Colonic mucosa (tissue), 4 donors: ENCODE measurements at regions of chr1 and their contacts with region 1.

Region 1: GRCh38 chr1:42335050-42335808 is at the start of gene FOXJ3:
- DNase-seq: peak; percentile 93
- H3K4me3 ChIP-seq: peak within 1 kb of the TSS; percentile 91
- H3K27ac ChIP-seq: peak within 1 kb of the TSS; percentile 93
- H3K4me1 ChIP-seq: peaks cover 16% of the 10 kb centered on the region
- H3K27me3 ChIP-seq: no peaks in the 10 kb centered on the region
- CTCF ChIP-seq: no peak
- total RNA-seq, gene FOXJ3: 39.9 to 44.8 TPM

Region 2: GRCh38 chr1:42186152-42186551 is 149.1 kb before region 1 on chr1:
- intact Hi-C with region 1: loop called (anchors 10 kb)
- DNase-seq: no peak
- H3K4me3 ChIP-seq: no peak overlapping the region
- H3K27ac ChIP-seq: no peak overlapping the region
- H3K4me1 ChIP-seq: no peaks in the 10 kb centered on the region
- H3K27me3 ChIP-seq: no peaks in the 10 kb centered on the region
- CTCF ChIP-seq: no peak

Region 3: GRCh38 chr1:42221952-42222606 is 113.2 kb before region 1 on chr1:
- intact Hi-C with region 1: no loop called
- DNase-seq: no peak
- H3K4me3 ChIP-seq: no peak overlapping the region
- H3K27ac ChIP-seq: no peak overlapping the region
- H3K4me1 ChIP-seq: no peaks in the 10 kb centered on the region
- H3K27me3 ChIP-seq: no peaks in the 10 kb centered on the region
- CTCF ChIP-seq: no peak

Region 4: GRCh38 chr1:42462828-42463763 is 127.9 kb after region 1 on chr1 and contains the start of gene CCDC30:
- intact Hi-C with region 1: loop called (anchors 10 kb)
- DNase-seq: peak; percentile 97
- H3K4me3 ChIP-seq: peak within 1 kb of the TSS; percentile 83
- H3K27ac ChIP-seq: peak within 1 kb of the TSS; percentile 37
- H3K4me1 ChIP-seq: no peaks in the 10 kb centered on the region
- H3K27me3 ChIP-seq: no peaks in the 10 kb centered on the region
- CTCF ChIP-seq: no peak
- total RNA-seq, gene CCDC30: 1.5 to 1.8 TPM

Region 5: GRCh38 chr1:42479599-42479998 is 144.4 kb after region 1 on chr1:
- intact Hi-C with region 1: no loop called
- DNase-seq: no peak
- H3K4me3 ChIP-seq: no peak overlapping the region
- H3K27ac ChIP-seq: no peak overlapping the region
- H3K4me1 ChIP-seq: no peaks in the 10 kb centered on the region
- H3K27me3 ChIP-seq: no peaks in the 10 kb centered on the region
- CTCF ChIP-seq: no peak

Region 6: DNA sequence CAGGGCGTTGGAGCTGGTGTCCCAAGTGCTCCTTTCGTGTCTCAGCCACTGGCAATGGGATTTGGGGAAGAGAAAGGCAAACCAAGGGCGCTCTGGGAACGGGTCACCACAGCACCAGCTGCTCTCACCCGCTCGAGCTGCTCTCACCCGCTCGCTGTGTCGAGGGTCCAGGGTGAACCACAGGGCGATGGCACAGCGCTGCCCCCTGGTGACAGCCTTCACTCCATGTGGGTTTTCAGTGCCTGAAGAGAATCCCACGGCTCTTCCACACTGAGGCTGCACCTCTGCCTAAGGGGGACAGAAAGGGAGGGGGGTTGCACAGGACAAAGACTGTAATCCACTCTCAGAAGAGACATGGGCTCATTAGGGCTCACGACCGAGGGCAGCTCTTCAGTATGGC is 411.9 kb after region 1 on chr1:
- intact Hi-C with region 1: loop called (anchors 10 kb)
- DNase-seq: peak; percentile 41
- H3K4me3 ChIP-seq: no peak overlapping the region
- H3K27ac ChIP-seq: no peak overlapping the region
- H3K4me1 ChIP-seq: no peaks in the 10 kb centered on the region
- H3K27me3 ChIP-seq: no peaks in the 10 kb centered on the region
- CTCF ChIP-seq: peak; percentile 44